ENCODE measurements at regions of chr9 and their contacts with region 1.

Region 1: GRCh38 chr9:105290398-105290797 is 45.9 kb downstream of the SLC44A1 start:
- DNase-seq: no peak
- ATAC-seq: no peak

Region 2: GRCh38 chr9:105330755-105331154 is 40.4 kb after region 1 on chr9:
- intact Hi-C with region 1: loop called (anchors 5 kb)
- DNase-seq: no peak
- ATAC-seq: no peak